ENCODE measurements at regions of chr6 and their contacts with region 1.

Region 1: GRCh38 chr6:134870677-134871498 is 79.0 kb downstream of the ALDH8A1 start:
- DNase-seq: no peak
- H3K4me3 ChIP-seq: no peak overlapping the region
- CTCF ChIP-seq: no peak
- POLR2A ChIP-seq: no peak

Region 2: DNA sequence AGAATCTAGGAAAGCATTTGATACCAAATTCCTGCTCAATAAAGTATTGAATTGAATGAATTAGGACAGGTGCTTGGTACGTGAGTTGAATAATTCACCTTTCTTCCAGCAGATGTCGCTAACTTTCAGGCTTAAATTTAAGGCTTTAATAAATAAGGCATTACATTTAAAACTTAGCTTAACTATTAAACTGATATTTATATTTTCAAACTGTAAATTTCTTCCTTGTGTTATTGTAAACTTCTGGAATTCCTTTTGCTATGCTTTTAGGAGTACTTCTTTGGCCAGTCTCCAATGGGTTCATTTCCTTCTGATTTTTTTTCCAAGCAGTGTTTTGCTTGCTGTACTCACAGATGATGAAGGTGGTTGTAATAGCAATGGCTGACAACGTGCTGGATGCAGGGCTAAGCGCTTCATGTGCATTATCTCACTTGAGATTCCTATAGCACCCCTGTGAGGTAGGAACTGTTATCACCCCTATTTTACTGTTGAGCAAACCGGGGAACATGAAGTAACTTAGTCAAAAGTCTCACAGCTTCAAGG is 747.2 kb before region 1 on chr6:
- intact Hi-C with region 1: loop called (anchors 10 kb)
- DNase-seq: peak in 1 of 2 donors; percentile 20
- H3K4me3 ChIP-seq: no peak overlapping the region
- CTCF ChIP-seq: no peak
- POLR2A ChIP-seq: no peak

Region 3: GRCh38 chr6:134161036-134161435 is 709.9 kb before region 1 on chr6:
- intact Hi-C with region 1: loop called (anchors 5 kb)
- DNase-seq: no peak
- H3K4me3 ChIP-seq: no peak overlapping the region
- CTCF ChIP-seq: no peak
- POLR2A ChIP-seq: no peak

Region 4: DNA sequence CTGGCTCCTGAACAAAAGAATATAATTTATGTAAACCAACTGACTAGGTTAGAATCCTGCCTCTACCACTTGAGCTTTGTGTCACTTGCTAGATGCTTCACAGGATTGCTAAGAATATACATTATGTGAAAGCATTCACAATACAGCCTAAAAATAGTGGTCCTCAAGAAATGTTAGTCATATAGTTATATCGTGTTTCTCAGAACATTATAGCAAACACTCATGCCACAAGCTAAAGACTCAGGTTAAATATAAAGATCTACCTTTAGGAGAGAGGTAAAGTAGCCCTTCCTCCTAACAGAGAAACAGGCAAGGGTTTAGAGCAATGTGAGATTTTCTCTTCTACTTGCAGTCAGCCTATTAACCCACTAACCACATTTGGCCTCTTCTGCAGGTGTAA is 96.8 kb after region 1 on chr6:
- intact Hi-C with region 1: no loop called
- DNase-seq: no peak
- H3K4me3 ChIP-seq: no peak overlapping the region
- CTCF ChIP-seq: no peak
- POLR2A ChIP-seq: no peak

Measured in lower leg skin (tissue), 4 donors.